OCI-LY7 (cell line): ENCODE measurements at regions of chr10 and their contacts with region 1.

Region 1: GRCh38 chr10:69957886-69958555 is 94.6 kb upstream of the MACROH2A2 start:
- DNase-seq: peak; percentile 78
- H3K4me3 ChIP-seq: no peak overlapping the region
- H3K27ac ChIP-seq: no peak overlapping the region
- H3K4me1 ChIP-seq: peaks cover 44% of the 10 kb centered on the region
- CTCF ChIP-seq: peak; percentile 92

Region 2: DNA sequence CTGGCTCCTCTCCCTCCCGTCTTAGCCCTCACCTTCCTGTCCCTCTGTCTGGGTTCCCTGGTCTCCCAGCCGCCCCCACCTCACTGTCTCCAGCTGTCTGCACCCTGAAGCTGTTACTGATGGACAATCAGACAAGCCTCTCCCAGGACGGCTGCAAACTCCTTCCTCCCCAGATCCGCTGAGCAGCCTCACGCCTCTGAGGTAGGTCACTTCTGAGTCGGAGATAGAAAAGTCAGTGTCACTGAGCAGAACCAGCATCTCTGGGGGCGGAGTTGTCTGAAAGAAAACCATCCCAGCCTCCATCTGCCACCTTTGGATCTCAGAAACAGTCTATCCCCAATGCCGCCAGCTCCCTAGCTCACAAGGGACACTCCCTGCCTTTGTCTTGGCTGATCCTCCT is 300.6 kb before region 1 on chr10:
- CTCF ChIA-PET with region 1: no interaction called
- POLR2A ChIA-PET with region 1: no interaction called
- intact Hi-C with region 1: no loop called
- DNase-seq: no peak
- H3K4me3 ChIP-seq: no peak overlapping the region
- H3K27ac ChIP-seq: no peak overlapping the region
- H3K4me1 ChIP-seq: no peaks in the 10 kb centered on the region
- CTCF ChIP-seq: no peak

Region 3: GRCh38 chr10:69936091-69936490 is 21.9 kb before region 1 on chr10:
- CTCF ChIA-PET with region 1: interaction called, 3 read pairs
- POLR2A ChIA-PET with region 1: interaction called, 3 read pairs
- intact Hi-C with region 1: loop called (anchors 2 kb)
- DNase-seq: peak; percentile 58
- H3K4me3 ChIP-seq: no peak overlapping the region
- H3K27ac ChIP-seq: no peak overlapping the region
- H3K4me1 ChIP-seq: no peaks in the 10 kb centered on the region
- CTCF ChIP-seq: peak; percentile 68

Region 4: DNA sequence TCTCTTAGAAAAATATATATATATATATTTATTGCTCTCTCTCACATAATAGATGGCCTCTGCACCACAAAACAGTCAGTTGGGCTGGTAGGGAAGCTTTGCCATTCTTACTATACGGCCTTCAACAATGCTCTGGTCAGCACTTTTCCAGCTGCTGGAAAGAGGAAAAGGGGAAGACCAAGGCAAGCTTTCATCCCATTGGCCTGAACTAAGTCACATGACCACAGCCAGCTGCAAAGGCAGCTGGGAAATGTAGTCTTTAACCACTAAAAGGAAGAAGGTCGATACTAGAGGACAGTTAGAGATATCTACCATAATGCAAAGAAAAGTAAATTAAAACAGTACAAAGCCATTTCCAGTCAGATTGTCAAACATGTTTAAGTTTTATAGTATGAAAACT is 36.2 kb after region 1 on chr10:
- CTCF ChIA-PET with region 1: interaction called, 17 read pairs
- POLR2A ChIA-PET with region 1: no interaction called
- intact Hi-C with region 1: no loop called
- DNase-seq: peak; percentile 49
- H3K4me3 ChIP-seq: no peak overlapping the region
- H3K27ac ChIP-seq: no peak overlapping the region
- H3K4me1 ChIP-seq: no peaks in the 10 kb centered on the region
- CTCF ChIP-seq: no peak